ENCODE measurements at regions of chr22 and their contacts with region 1.

Region 1: GRCh38 chr22:25472382-25472781 is 92.1 kb upstream of the GRK3 start:
- DNase-seq: no peak
- ATAC-seq: no peak
- H3K4me3 ChIP-seq: no peak overlapping the region
- H3K27ac ChIP-seq: no peak overlapping the region
- H3K4me1 ChIP-seq: peaks cover 0 to 15% (median 6%) of the 10 kb centered on the region in 12 donors
- H3K27me3 ChIP-seq: no peaks in the 10 kb centered on the region
- CTCF ChIP-seq: no peak
- POLR2A ChIP-seq: no peak

Region 2: DNA sequence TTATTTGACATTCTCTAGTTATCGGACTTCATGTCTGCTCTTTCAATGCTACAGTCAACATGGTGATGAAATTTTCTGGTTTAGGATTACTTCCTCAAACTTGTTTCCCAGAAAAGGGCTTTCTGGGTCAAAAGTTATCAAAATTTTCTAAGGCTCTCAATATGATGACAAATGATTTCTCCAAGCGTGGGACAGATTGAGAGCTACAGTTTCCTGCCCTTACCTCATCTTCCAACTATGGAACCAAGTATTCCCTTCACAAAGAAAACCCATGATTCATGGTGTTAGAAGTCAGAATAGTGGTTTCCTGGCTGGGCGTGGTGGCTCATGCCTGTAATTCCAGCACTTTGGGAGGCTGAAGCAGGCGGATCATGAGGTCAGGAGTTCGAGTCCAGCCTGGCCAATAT is 287.4 kb after region 1 on chr22:
- intact Hi-C with region 1: loop called in 1 of 10 experiments (anchors 5 kb)
- DNase-seq: peak in 2 of 5 donors; percentile 57 to 69
- ATAC-seq: peak in 2 of 4 donors; percentile 35 to 64
- H3K4me3 ChIP-seq: no peak overlapping the region
- H3K27ac ChIP-seq: peak overlapping the region; percentile 5 to 93 (median 59)
- H3K4me1 ChIP-seq: peaks cover 0 to 81% (median 31%) of the 10 kb centered on the region in 12 donors
- H3K27me3 ChIP-seq: no peaks in the 10 kb centered on the region
- CTCF ChIP-seq: no peak
- POLR2A ChIP-seq: no peak

Measured in heart left ventricle (tissue), 16 donors.